GM23248 (cell line): ENCODE measurements at regions of chr3 and their contacts with region 1.

Region 1: GRCh38 chr3:37456270-37456708 is 281.9 kb upstream of the LRRFIP2 start:
- DNase-seq: peak; percentile 33
- H3K4me3 ChIP-seq: peak overlapping the region; percentile 18; the same call in 1 of the 2 replicates
- H3K27ac ChIP-seq: no peak overlapping the region
- H3K4me1 ChIP-seq: no peaks in the 10 kb centered on the region
- H3K27me3 ChIP-seq: peaks cover 51% of the 10 kb centered on the region

Region 2: DNA sequence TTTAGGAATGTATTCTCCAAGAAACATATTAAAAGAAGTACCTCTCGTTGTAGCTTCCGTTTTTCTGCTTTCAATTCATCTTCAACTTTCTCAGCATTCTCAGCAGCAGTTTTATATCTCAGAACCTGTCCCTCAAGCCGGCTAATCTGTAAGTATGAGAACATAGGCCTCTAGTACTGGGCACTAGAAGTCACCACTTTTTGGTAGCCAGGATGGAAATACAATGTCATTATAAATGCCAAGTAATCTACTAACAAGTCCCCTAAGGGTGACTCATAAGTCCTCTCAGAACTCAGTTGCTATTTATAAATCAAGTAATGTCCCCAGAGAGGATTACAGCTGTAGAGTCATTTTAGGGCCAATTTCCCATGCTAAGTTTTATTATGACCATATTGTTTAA is 401.9 kb before region 1 on chr3:
- in situ Hi-C with region 1: no loop called
- DNase-seq: peak; percentile 95
- H3K4me3 ChIP-seq: 0 out of 2 replicates have a peak overlapping the region, but pooled peaks have one; percentile 1
- H3K27ac ChIP-seq: peak overlapping the region; percentile 88
- H3K4me1 ChIP-seq: peaks cover 39% of the 10 kb centered on the region
- H3K27me3 ChIP-seq: no peaks in the 10 kb centered on the region

Region 3: DNA sequence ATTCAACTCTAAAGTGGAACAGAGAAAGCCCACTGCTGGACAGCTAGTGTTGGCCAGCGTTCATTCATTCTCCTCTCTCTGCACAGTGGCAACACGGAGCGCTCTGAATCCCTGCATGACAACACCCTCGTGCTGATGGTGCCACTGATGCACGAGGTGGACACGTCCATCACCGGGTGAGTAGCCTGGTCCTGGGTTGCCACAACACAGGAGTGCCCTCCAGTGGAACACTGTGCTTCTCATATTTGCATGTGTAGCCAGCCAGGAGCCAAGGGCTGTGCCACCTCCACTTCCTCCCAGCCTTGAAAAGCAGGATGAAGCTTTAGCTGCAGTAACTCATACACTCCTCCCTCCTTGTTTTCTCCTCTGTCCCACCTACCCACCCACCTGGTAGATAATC is 285.4 kb after region 1 on chr3:
- in situ Hi-C with region 1: no loop called
- DNase-seq: peak; percentile 15
- H3K4me3 ChIP-seq: no peak overlapping the region
- H3K27ac ChIP-seq: no peak overlapping the region
- H3K4me1 ChIP-seq: no peaks in the 10 kb centered on the region
- H3K27me3 ChIP-seq: peaks cover 5% of the 10 kb centered on the region

Region 4: DNA sequence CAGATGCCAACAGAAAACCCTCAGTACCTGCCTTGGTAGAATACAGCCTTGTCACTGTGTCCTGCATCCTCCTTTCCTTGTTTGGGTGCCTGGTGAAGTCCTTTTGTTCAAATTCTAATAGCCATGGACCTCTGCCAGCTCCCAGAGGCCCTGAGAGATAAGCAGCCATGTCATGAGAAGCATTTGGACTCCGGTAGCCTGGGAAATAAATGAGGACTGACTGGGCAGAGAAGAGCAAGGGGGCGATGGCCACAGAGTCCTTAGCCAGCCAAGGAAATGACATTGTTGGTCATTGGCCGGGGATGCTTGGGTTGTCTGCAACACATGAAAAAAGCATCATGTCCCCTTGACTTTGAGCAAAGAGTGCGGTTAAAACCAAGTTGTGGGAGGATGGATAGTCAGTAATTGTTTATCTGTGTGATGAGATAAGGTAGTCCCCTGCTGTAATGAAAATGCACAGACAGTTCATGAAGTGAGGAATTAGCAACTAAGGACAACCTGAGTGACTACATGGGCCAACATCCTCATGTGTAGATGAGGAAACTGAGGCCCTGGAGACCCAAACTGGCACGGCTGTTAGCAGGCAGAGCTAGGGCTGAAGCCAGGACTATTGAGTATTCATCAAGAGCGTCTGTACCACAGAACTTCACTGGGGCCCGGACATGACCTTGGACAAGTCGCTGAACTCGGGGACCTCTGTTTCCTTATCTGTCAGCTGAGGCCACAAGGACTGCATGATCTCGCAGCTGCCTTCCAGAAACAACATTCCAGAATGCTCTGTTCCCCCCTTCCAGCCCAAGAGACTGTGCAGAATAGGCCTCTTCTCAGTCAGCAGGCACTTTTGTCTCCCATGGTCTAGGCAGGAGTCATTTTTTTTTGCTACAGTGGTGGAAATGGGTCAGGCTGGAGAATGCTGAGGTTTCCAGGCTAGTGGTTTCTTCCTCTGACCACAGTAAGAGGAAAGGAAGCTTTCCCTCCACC is 314.9 kb after region 1 on chr3:
- in situ Hi-C with region 1: loop called (anchors 5 kb)
- DNase-seq: no peak
- H3K4me3 ChIP-seq: no peak overlapping the region
- H3K27ac ChIP-seq: no peak overlapping the region
- H3K4me1 ChIP-seq: no peaks in the 10 kb centered on the region
- H3K27me3 ChIP-seq: peaks cover 13% of the 10 kb centered on the region